Naive thymus-derived CD4-positive, alpha-beta T cell (primary cell): ENCODE measurements at regions of chr1 and their contacts with region 1.

Region 1: GRCh38 chr1:150613061-150613920 is 16.1 kb downstream of the ENSA start:
- DNase-seq: peak in 2 of 9 donors; percentile 47 to 55
- ATAC-seq: peak; percentile 48
- H3K4me3 ChIP-seq: no peak overlapping the region
- H3K4me3 Mint-ChIP-seq: peak overlapping the region in 4 of 10 donors; percentile 21 to 80 (median 54)
- H3K27ac ChIP-seq: no peak overlapping the region
- H3K27ac Mint-ChIP-seq: peak overlapping the region; percentile 29 to 95 (median 88)
- H3K4me1 ChIP-seq: peaks cover 30 to 52% of the 10 kb centered on the region in 2 donors
- H3K4me1 Mint-ChIP-seq: peaks cover 27 to 59% (median 51%) of the 10 kb centered on the region in 7 donors
- H3K27me3 ChIP-seq: no peaks in the 10 kb centered on the region
- H3K27me3 Mint-ChIP-seq: no peaks in the 10 kb centered on the region

Region 2: GRCh38 chr1:150293433-150294168 is 319.7 kb before region 1 on chr1 and contains the start of gene MRPS21:
- CTCF ChIA-PET with region 1: no interaction called
- POLR2A ChIA-PET with region 1: no interaction called
- intact Hi-C with region 1: no loop called
- DNase-seq: peak; percentile 64 to 88 (median 83)
- ATAC-seq: peak; percentile 99
- H3K4me3 ChIP-seq: peak within 1 kb of the TSS; percentile 76
- H3K4me3 Mint-ChIP-seq: peak within 1 kb of the TSS; percentile 85 to 97 (median 92)
- H3K27ac ChIP-seq: peak within 1 kb of the TSS; percentile 92
- H3K27ac Mint-ChIP-seq: peak within 1 kb of the TSS; percentile 92 to 100 (median 98)
- H3K4me1 ChIP-seq: peaks cover 10 to 14% of the 10 kb centered on the region in 2 donors
- H3K4me1 Mint-ChIP-seq: peaks cover 20 to 45% (median 32%) of the 10 kb centered on the region in 7 donors
- H3K27me3 ChIP-seq: no peaks in the 10 kb centered on the region
- H3K27me3 Mint-ChIP-seq: no peaks in the 10 kb centered on the region
- total RNA-seq, gene MRPS21: 47.9 to 72.8 (median 67.5) TPM

Region 3: DNA sequence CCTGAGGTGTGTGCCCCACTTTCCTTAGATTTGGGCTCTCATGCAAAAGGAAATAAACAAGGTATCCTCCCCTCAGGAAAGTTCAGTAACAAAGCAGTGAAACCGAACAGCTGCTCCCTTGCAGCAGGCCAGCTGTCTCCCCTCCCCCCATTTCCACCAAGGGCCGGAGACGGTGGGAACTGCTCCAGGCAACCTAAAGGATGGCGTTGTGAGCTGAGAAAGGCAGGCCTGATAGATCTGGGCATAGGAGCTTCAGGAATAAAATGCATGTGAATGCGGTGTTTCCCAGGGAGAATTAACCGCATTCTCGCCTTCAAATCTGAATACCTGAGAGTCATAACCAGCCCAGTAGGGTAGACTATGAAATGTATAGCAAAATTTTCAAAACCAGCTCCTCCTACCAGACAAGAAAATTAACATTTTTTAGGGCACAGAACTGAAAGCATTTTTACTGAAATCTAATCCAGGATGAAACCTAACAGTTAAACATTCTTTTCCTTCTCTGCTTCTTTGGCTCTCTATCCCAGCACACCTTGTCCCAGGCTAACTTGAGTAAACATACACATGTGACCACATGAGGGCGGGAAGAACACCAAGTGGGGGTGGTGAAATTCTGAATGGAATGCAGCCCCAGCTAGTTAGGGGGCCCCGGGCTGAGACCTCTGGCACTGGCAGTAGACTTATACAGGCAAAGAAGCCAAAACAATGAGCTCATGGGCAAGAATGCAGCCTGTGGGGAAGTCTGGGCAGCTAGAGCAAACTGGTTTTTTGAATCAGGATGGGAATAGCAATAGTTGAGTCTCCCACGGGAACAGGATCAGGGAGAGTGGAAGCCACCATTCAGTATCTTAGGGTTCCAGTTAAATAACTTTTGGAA is 45.3 kb before region 1 on chr1:
- CTCF ChIA-PET with region 1: interaction called, 272 read pairs
- POLR2A ChIA-PET with region 1: interaction called, 254 read pairs
- intact Hi-C with region 1: loop called in 1 of 2 experiments (anchors 1 kb)
- DNase-seq: peak in 5 of 9 donors; percentile 49 to 70 (median 62)
- ATAC-seq: peak; percentile 5
- H3K4me3 ChIP-seq: peak overlapping the region; percentile 73
- H3K4me3 Mint-ChIP-seq: peak overlapping the region; percentile 84 to 95 (median 90)
- H3K27ac ChIP-seq: peak overlapping the region; percentile 97
- H3K27ac Mint-ChIP-seq: peak overlapping the region; percentile 96 to 100 (median 97)
- H3K4me1 ChIP-seq: peaks cover 92 to 96% of the 10 kb centered on the region in 2 donors
- H3K4me1 Mint-ChIP-seq: peaks cover 41 to 95% (median 85%) of the 10 kb centered on the region in 7 donors
- H3K27me3 ChIP-seq: no peaks in the 10 kb centered on the region
- H3K27me3 Mint-ChIP-seq: no peaks in the 10 kb centered on the region

Region 4: DNA sequence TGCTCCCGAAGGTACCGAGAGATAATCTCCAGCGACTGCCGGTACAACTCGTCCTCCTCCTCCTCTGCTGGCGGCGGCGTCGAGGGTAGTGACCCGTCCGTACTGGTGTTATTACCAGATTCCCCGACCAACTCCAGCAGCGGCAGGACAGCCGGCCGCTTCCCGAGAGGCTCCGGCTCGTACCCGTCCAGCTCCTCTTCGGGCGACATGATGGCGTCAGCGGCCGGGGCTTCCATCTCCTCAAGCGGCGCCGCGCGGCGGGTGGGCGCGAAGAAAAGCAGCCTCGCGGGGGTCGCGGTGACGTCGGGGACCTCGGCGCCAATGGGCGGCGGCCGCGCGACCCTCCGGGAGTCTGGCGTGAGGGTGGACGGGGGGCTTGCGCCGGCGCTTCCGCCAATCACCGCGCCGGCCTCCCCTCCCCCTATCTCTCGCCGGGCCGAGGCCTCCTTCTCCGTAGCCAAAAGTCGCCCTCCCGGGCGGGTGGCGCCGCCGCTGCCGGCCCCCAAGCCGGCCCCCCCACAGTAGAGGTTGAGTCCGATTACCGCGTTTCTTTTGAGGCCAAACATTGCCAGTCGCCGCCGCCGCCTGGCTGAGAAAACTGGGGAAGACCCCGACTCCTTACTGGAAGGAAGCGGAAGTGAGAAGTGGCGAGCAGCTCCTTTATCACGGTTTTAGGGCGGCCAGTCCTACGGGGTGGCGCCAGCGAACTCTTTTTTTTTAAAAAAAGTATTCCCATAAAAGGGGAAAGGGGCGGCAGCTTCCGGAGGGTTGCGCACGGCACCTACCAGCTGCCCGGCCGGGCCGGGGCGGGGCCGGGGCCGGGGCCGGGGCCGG is 34.1 kb before region 1 on chr1 and contains the start of gene MCL1:
- CTCF ChIA-PET with region 1: interaction called, 3 read pairs
- POLR2A ChIA-PET with region 1: interaction called, 92 read pairs
- intact Hi-C with region 1: loop called (anchors 1 kb)
- DNase-seq: peak; percentile 75 to 88 (median 83)
- ATAC-seq: peak; percentile 90
- H3K4me3 ChIP-seq: peak within 1 kb of the TSS; percentile 95
- H3K4me3 Mint-ChIP-seq: peak within 1 kb of the TSS; percentile 92 to 99 (median 95)
- H3K27ac ChIP-seq: peak within 1 kb of the TSS; percentile 97
- H3K27ac Mint-ChIP-seq: peak within 1 kb of the TSS; percentile 96 to 99 (median 98)
- H3K4me1 ChIP-seq: peaks cover 3 to 15% of the 10 kb centered on the region in 2 donors
- H3K4me1 Mint-ChIP-seq: peaks cover 25 to 39% (median 29%) of the 10 kb centered on the region in 7 donors
- H3K27me3 ChIP-seq: no peaks in the 10 kb centered on the region
- H3K27me3 Mint-ChIP-seq: peaks cover 0 to 7% (median 0%) of the 10 kb centered on the region in 5 donors
- total RNA-seq, gene MCL1: 302 to 1,400 (median 377) TPM

Region 5: GRCh38 chr1:150961799-150962198 is 348.5 kb after region 1 on chr1:
- CTCF ChIA-PET with region 1: no interaction called
- POLR2A ChIA-PET with region 1: no interaction called
- intact Hi-C with region 1: no loop called
- DNase-seq: no peak
- ATAC-seq: no peak
- H3K4me3 ChIP-seq: no peak overlapping the region
- H3K4me3 Mint-ChIP-seq: no peak overlapping the region
- H3K27ac ChIP-seq: no peak overlapping the region
- H3K27ac Mint-ChIP-seq: peak overlapping the region in 4 of 9 donors; percentile 31 to 68 (median 42)
- H3K4me1 ChIP-seq: no peaks in the 10 kb centered on the region
- H3K4me1 Mint-ChIP-seq: peaks cover 0 to 12% (median 0%) of the 10 kb centered on the region in 7 donors
- H3K27me3 ChIP-seq: no peaks in the 10 kb centered on the region
- H3K27me3 Mint-ChIP-seq: no peaks in the 10 kb centered on the region

Region 6: GRCh38 chr1:151133011-151133806 is 519.9 kb after region 1 on chr1:
- CTCF ChIA-PET with region 1: no interaction called
- POLR2A ChIA-PET with region 1: no interaction called
- intact Hi-C with region 1: no loop called
- DNase-seq: no peak
- ATAC-seq: no peak
- H3K4me3 ChIP-seq: no peak overlapping the region
- H3K4me3 Mint-ChIP-seq: peak overlapping the region in 4 of 10 donors; percentile 48 to 75 (median 68)
- H3K27ac ChIP-seq: no peak overlapping the region
- H3K27ac Mint-ChIP-seq: no peak overlapping the region
- H3K4me1 ChIP-seq: peaks cover 0 to 4% of the 10 kb centered on the region in 2 donors
- H3K4me1 Mint-ChIP-seq: peaks cover 8 to 15% (median 11%) of the 10 kb centered on the region in 7 donors
- H3K27me3 ChIP-seq: no peaks in the 10 kb centered on the region
- H3K27me3 Mint-ChIP-seq: peaks cover 0 to 12% (median 0%) of the 10 kb centered on the region in 5 donors